Sigmoid colon (tissue), 7 donors: ENCODE measurements at regions of chr2 and their contacts with region 1.

Region 1: GRCh38 chr2:158968396-158969161 is at the start of gene TANC1:
- DNase-seq: peak; percentile 96
- H3K4me3 ChIP-seq: peak within 1 kb of the TSS; percentile 65 to 82 (median 76)
- H3K27ac ChIP-seq: peak within 1 kb of the TSS; percentile 89 to 96 (median 92)
- H3K4me1 ChIP-seq: peaks cover 0 to 49% (median 40%) of the 10 kb centered on the region in 4 donors
- H3K27me3 ChIP-seq: no peaks in the 10 kb centered on the region
- CTCF ChIP-seq: no peak
- EP300 ChIP-seq: no peak
- POLR2A ChIP-seq: peak; percentile 80 to 89
- total RNA-seq, gene TANC1: 47.0 to 74.5 (median 56.9) TPM

Region 2: DNA sequence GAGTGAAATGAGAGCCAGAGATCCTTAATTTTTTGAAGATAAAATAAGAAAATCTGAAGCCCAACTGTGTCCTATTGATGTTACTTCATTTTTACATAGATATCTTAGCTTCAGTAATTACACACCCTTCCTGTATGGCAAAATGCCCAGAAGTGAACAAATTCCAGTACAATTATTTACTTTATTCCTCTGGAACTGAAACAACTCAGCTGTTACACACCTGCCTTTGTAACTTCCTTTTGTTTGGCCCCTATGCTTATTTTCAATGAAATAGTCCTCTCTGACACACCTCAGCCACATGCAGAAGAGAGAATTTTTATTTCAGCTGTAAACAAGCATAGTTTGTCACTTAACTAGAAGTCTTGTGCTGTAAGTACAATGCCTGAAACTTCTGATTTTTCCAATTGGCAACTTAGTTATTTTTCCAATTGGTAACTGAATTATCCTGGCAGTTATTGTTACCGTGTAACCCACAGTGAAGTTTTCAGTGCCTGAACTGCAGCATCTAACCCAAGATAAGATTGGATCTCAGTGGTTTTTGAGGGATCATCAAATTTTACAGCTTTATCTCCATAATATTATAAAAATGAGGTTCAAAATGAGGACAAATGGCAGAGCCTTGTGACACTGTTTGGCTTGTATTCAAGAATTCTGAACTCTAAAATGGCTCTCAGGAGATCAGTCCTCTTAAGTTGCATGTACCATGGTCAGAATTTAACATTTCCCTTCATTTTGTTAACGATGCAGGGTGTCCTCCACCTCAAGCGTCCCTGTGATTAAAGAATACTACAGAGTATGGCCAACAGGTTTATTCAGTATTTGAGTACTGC is 429.2 kb before region 1 on chr2:
- intact Hi-C with region 1: no loop called
- DNase-seq: no peak
- H3K4me3 ChIP-seq: no peak overlapping the region
- H3K27ac ChIP-seq: peak overlapping the region in 2 of 4 donors; percentile 30 to 52
- H3K4me1 ChIP-seq: peaks cover 0 to 11% (median 9%) of the 10 kb centered on the region in 4 donors
- H3K27me3 ChIP-seq: no peaks in the 10 kb centered on the region
- CTCF ChIP-seq: no peak
- EP300 ChIP-seq: no peak
- POLR2A ChIP-seq: no peak

Region 3: DNA sequence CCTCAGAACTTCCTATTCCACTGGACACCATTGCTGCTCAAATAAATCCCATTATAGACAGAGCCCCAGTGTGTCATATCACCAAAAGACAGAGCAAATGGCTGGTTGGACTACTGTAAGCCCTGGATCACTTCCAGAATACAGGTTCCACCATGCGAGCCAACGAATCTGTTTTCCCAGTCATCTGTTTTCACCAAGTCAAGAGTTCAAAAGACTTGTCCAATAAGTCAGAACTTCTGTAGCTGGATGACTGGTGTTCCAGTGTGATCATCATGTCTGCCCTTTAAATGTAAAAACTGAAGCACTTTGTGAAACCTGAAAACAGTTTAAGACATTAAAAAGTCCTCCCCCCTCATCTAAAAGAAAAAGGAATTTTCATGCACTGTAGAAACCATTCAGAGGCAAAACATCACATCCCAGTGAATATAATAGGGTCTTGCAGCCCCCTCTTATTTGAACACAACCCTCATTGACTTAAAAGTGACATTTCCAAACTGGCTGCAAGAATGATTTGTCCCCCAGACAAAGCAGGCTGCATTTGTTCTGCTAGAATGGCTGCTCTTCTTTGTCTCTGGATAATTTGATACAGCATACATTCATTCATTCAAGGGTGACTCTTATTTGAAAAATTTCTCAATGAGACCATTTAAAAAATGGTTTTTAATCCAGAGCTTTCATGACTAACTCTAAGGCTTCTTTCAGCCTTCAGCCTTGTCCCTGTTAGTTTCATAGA is 64.7 kb before region 1 on chr2:
- intact Hi-C with region 1: loop called (anchors 5 kb)
- DNase-seq: no peak
- H3K4me3 ChIP-seq: no peak overlapping the region
- H3K27ac ChIP-seq: peak overlapping the region in 1 of 4 donors; percentile 51
- H3K4me1 ChIP-seq: peaks cover 0 to 29% (median 22%) of the 10 kb centered on the region in 4 donors
- H3K27me3 ChIP-seq: no peaks in the 10 kb centered on the region
- CTCF ChIP-seq: no peak
- EP300 ChIP-seq: peak in 1 of 4 donors; percentile 13
- POLR2A ChIP-seq: no peak

Region 4: GRCh38 chr2:158953926-158954763 is 14.4 kb before region 1 on chr2:
- intact Hi-C with region 1: loop called (anchors 2 kb)
- DNase-seq: peak; percentile 95
- H3K4me3 ChIP-seq: no peak overlapping the region
- H3K27ac ChIP-seq: peak overlapping the region; percentile 54 to 81 (median 72)
- H3K4me1 ChIP-seq: peaks cover 0 to 38% (median 28%) of the 10 kb centered on the region in 4 donors
- H3K27me3 ChIP-seq: no peaks in the 10 kb centered on the region
- CTCF ChIP-seq: no peak
- EP300 ChIP-seq: peak; percentile 20 to 63 (median 30)
- POLR2A ChIP-seq: no peak

Region 5: GRCh38 chr2:159064446-159065301 is 96.1 kb after region 1 on chr2:
- intact Hi-C with region 1: no loop called
- DNase-seq: no peak
- H3K4me3 ChIP-seq: no peak overlapping the region
- H3K27ac ChIP-seq: peak overlapping the region; percentile 49 to 71 (median 70)
- H3K4me1 ChIP-seq: peaks cover 0 to 54% (median 50%) of the 10 kb centered on the region in 4 donors
- H3K27me3 ChIP-seq: no peaks in the 10 kb centered on the region
- CTCF ChIP-seq: no peak
- EP300 ChIP-seq: no peak
- POLR2A ChIP-seq: no peak

Region 6: DNA sequence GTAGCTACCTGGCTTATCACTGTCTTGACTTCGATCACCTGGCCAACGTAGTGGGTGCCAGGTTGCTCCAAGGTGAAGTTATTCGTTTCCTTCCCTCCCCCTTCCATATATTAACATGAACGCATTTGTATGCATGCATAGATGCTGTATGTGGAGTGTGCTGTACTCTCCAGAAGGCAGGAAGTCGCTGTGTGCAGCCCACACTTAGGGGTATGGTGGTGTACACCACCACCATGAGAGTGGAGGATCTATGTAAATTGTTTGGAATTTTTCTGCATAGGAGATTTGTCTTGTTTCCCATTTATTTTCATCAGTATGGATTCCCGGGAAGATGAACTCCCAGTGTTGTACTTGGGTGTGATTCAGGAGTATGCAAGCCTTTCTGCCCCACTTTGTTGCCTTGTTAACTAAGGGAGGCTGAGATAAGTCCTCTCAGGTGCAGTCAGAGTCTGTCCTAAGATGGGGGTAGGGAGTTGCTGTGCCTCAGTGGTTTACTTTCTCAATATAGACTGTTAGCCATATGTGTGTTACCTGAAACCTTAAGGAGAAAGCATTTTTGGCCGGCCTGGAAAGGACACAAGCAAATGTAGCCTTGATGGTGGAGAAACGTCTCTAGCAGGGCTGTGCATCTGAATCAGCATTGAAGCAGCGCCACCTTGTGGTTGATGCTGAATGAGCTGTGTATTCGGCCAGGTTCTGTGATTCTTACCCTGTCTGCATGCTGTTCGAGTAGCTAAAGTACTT is 149.7 kb after region 1 on chr2:
- intact Hi-C with region 1: loop called (anchors 2 kb)
- DNase-seq: peak; percentile 90
- H3K4me3 ChIP-seq: no peak overlapping the region
- H3K27ac ChIP-seq: peak overlapping the region in 2 of 4 donors; percentile 51 to 59
- H3K4me1 ChIP-seq: peaks cover 0 to 34% (median 25%) of the 10 kb centered on the region in 4 donors
- H3K27me3 ChIP-seq: no peaks in the 10 kb centered on the region
- CTCF ChIP-seq: peak; percentile 71 to 90 (median 84)
- EP300 ChIP-seq: no peak
- POLR2A ChIP-seq: no peak

Region 7: DNA sequence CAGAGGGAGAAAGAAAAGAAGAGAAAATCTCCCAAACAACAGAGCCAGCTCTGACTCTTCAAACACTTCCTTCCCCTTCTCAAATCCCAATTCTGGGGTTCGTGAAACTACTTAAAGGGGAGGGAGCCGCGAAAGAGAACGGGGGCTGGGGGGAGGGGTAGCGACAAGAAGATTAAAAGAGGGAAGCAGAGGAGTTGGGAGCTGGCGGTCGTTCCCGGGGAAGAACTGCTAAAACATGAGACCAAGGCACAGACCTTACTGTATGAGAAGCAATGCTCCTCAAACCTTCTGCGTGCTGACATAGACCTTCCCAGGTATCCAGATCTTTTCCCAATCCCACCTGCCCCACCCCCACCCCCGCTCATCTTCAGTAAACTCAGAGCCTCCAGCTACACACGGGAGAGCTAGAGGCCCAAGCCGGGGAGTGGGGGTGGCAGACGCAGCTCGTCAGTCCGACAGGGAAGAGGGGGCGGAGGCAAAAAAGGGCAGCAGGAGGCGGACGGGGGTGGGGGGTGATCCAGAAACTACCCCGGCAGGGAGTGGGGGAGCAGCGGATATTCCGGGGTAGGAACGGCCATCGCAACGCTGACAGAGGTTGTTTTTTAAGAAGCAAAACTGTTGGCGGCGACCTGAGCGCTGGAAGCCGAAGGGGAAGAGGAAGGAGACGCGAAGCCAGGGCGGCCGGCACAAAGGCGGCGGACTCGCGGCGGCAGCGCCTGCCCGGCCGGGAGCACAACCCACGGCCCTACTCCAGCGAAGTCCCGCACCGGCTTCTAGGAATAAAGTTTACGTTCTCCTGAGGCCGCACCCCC is 646.8 kb after region 1 on chr2:
- intact Hi-C with region 1: loop called (anchors 10 kb)
- DNase-seq: peak; percentile 97
- H3K4me3 ChIP-seq: peak overlapping the region; percentile 75 to 94 (median 85)
- H3K27ac ChIP-seq: peak overlapping the region; percentile 95 to 99 (median 98)
- H3K4me1 ChIP-seq: peaks cover 0 to 48% (median 32%) of the 10 kb centered on the region in 4 donors
- H3K27me3 ChIP-seq: no peaks in the 10 kb centered on the region
- CTCF ChIP-seq: no peak
- EP300 ChIP-seq: no peak
- POLR2A ChIP-seq: peak; percentile 88 to 89